CD8-positive, alpha-beta T cell (primary cell): ENCODE measurements at regions of chr4 and their contacts with region 1.

Region 1: DNA sequence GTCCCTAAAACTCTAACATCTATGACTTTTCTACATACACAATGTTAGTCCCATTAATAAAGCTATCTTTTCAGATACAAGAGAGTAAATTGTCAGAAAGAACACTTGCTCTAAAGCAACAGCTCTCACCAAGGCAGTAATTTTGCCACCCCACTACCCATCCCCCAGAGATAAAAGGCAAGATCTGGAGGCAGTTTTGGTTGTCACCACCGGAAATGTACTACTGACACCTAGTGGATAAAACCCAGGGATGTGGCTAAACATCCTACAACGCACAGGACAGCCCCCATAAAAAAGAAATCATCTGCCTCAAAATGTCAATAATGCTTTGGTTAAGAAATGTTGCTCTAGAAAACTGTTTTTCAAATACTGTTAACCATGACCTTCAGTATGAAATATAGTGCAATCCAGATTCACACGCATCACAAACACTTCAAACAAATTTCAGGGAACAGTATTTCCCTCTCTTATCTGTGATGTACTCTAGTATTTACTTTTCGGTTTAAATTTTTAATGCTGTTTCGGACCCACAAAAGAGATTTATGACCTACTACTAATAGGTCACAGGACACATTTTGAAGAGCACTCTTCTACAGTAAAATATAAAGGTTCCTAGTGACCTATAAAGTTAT is 5.1 kb downstream of the FBXL5 start:
- DNase-seq: peak; percentile 16 to 89 (median 63)
- ATAC-seq: peak; percentile 82
- H3K4me3 ChIP-seq: no peak overlapping the region
- H3K4me3 Mint-ChIP-seq: peak overlapping the region; percentile 48
- H3K27ac ChIP-seq: no peak overlapping the region
- H3K27ac Mint-ChIP-seq: peak overlapping the region; percentile 56
- H3K4me1 ChIP-seq: peaks cover 62% of the 10 kb centered on the region
- H3K4me1 Mint-ChIP-seq: peaks cover 76% of the 10 kb centered on the region
- H3K27me3 ChIP-seq: no peaks in the 10 kb centered on the region
- H3K27me3 Mint-ChIP-seq: no peaks in the 10 kb centered on the region
- CTCF ChIP-seq: peak; percentile 70

Region 2: GRCh38 chr4:15231265-15232091 is 418.6 kb before region 1 on chr4:
- CTCF ChIA-PET with region 1: interaction called, 5 read pairs
- POLR2A ChIA-PET with region 1: no interaction called
- intact Hi-C with region 1: loop called (anchors 1 to 2 kb)
- DNase-seq: peak; percentile 38 to 83 (median 71)
- ATAC-seq: peak; percentile 81
- H3K4me3 ChIP-seq: no peak overlapping the region
- H3K4me3 Mint-ChIP-seq: no peak overlapping the region
- H3K27ac ChIP-seq: no peak overlapping the region
- H3K27ac Mint-ChIP-seq: no peak overlapping the region
- H3K4me1 ChIP-seq: peaks cover 29% of the 10 kb centered on the region
- H3K4me1 Mint-ChIP-seq: peaks cover 31% of the 10 kb centered on the region
- H3K27me3 ChIP-seq: no peaks in the 10 kb centered on the region
- H3K27me3 Mint-ChIP-seq: no peaks in the 10 kb centered on the region
- CTCF ChIP-seq: peak; percentile 71

Region 3: DNA sequence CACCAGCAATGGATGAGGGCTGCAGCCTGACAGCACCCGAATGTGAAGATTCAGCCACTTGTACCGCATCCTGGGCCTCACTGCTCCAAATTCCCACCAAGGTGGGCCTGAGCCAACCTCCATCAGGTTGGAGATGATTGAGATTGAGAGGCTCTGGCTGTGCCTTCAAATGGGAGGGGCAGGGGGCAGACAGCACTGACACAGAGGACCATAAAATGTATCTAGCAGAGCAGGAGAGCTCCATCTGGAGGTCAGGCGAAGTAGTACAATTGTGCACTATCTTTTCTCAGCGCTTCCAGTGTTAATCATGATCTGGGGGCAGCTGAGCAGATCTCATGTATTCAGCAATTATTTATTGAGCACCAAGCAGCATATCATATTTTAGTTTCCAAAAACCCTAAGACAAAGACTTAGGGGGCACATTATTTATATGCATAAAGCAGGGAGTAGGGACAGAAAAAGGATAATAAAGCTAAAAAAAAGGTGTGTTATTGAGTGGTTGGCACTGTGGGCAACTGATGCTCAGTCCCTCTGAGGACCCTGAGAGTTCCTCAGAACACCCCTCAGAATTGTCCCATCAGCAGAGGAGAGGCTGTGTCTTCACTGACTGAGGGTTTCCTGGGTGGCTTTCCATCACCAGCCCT is 253.8 kb before region 1 on chr4:
- CTCF ChIA-PET with region 1: no interaction called
- POLR2A ChIA-PET with region 1: interaction called, 3 read pairs
- intact Hi-C with region 1: loop called in 1 of 2 experiments (anchors 5 kb)
- DNase-seq: peak; percentile 5 to 69 (median 43)
- ATAC-seq: peak; percentile 85
- H3K4me3 ChIP-seq: no peak overlapping the region
- H3K4me3 Mint-ChIP-seq: no peak overlapping the region
- H3K27ac ChIP-seq: no peak overlapping the region
- H3K27ac Mint-ChIP-seq: no peak overlapping the region
- H3K4me1 ChIP-seq: peaks cover 16% of the 10 kb centered on the region
- H3K4me1 Mint-ChIP-seq: peaks cover 29% of the 10 kb centered on the region
- H3K27me3 ChIP-seq: no peaks in the 10 kb centered on the region
- H3K27me3 Mint-ChIP-seq: no peaks in the 10 kb centered on the region
- CTCF ChIP-seq: peak; percentile 72

Region 4: GRCh38 chr4:15479089-15479912 is 170.7 kb before region 1 on chr4:
- CTCF ChIA-PET with region 1: no interaction called
- POLR2A ChIA-PET with region 1: no interaction called
- intact Hi-C with region 1: loop called in 1 of 2 experiments (anchors 2 kb)
- DNase-seq: peak in 2 of 9 experiments; percentile 26 to 40
- ATAC-seq: no peak
- H3K4me3 ChIP-seq: no peak overlapping the region
- H3K4me3 Mint-ChIP-seq: no peak overlapping the region
- H3K27ac ChIP-seq: no peak overlapping the region
- H3K27ac Mint-ChIP-seq: no peak overlapping the region
- H3K4me1 ChIP-seq: no peaks in the 10 kb centered on the region
- H3K4me1 Mint-ChIP-seq: no peaks in the 10 kb centered on the region
- H3K27me3 ChIP-seq: no peaks in the 10 kb centered on the region
- H3K27me3 Mint-ChIP-seq: no peaks in the 10 kb centered on the region
- CTCF ChIP-seq: no peak

Region 5: GRCh38 chr4:15513545-15513944 is 136.5 kb before region 1 on chr4:
- CTCF ChIA-PET with region 1: no interaction called
- POLR2A ChIA-PET with region 1: no interaction called
- intact Hi-C with region 1: no loop called
- DNase-seq: no peak
- ATAC-seq: no peak
- H3K4me3 ChIP-seq: no peak overlapping the region
- H3K4me3 Mint-ChIP-seq: no peak overlapping the region
- H3K27ac ChIP-seq: no peak overlapping the region
- H3K27ac Mint-ChIP-seq: no peak overlapping the region
- H3K4me1 ChIP-seq: no peaks in the 10 kb centered on the region
- H3K4me1 Mint-ChIP-seq: no peaks in the 10 kb centered on the region
- H3K27me3 ChIP-seq: no peaks in the 10 kb centered on the region
- H3K27me3 Mint-ChIP-seq: no peaks in the 10 kb centered on the region
- CTCF ChIP-seq: no peak